ENCODE measurements at regions of chr1 and their contacts with region 1.

Region 1: DNA sequence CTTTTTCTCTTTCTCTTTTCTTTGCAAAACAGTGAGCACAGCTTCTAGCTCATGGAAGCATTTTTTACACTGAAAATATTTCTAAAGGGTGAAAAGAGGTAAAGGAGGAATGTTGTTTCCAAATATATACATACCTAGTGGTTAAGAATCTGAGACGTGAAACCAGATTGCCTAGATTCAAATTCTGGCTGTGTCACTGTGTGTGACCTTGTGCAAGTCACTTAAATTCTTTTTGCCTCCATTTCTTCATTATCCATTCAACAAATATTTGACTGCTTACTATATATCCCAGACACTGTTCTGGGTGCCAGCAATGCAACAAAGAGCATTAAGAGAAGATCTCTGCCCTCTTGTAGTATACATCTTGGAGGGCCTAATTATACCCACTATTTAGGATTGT is 53.3 kb downstream of the ZFYVE9 start:
- DNase-seq: no peak
- ATAC-seq: no peak
- H3K4me3 ChIP-seq: no peak overlapping the region
- H3K4me3 Mint-ChIP-seq: no peak overlapping the region
- H3K27ac ChIP-seq: no peak overlapping the region
- H3K27ac Mint-ChIP-seq: no peak overlapping the region
- H3K4me1 ChIP-seq: no peaks in the 10 kb centered on the region
- H3K4me1 Mint-ChIP-seq: no peaks in the 10 kb centered on the region
- H3K27me3 ChIP-seq: no peaks in the 10 kb centered on the region
- H3K27me3 Mint-ChIP-seq: no peaks in the 10 kb centered on the region
- CTCF ChIP-seq: no peak

Region 2: DNA sequence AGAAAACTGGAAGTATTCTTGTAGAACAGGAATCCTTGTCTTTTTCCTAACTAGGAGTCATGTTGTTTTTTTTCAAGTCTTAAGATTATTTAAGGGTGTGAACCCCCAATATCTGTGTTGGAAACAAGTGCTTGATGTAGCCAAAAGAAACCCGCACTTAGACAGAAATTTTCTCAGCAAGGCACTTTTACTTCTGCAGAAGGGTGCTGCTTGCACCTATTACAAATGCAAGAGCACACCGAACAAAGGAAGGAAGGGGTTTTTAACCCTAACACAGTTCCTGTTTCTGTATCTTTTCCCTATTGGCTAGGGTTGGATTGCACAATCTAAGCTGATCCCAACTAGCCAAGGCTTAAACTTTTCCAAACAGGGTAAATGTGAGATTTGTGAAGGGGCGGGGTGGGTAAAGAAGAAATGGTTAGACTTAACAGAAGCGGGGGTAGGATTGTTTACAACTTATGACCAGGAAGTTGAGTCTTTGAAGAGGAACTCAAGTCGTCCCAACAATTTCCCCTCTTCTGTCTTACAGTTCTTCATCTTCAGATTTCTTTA is 21.8 kb after region 1 on chr1:
- CTCF ChIA-PET with region 1: no interaction called
- POLR2A ChIA-PET with region 1: no interaction called
- intact Hi-C with region 1: loop called in 1 of 2 experiments (anchors 1 kb)
- DNase-seq: no peak
- ATAC-seq: no peak
- H3K4me3 ChIP-seq: no peak overlapping the region
- H3K4me3 Mint-ChIP-seq: no peak overlapping the region
- H3K27ac ChIP-seq: no peak overlapping the region
- H3K27ac Mint-ChIP-seq: no peak overlapping the region
- H3K4me1 ChIP-seq: no peaks in the 10 kb centered on the region
- H3K4me1 Mint-ChIP-seq: no peaks in the 10 kb centered on the region
- H3K27me3 ChIP-seq: no peaks in the 10 kb centered on the region
- H3K27me3 Mint-ChIP-seq: no peaks in the 10 kb centered on the region
- CTCF ChIP-seq: no peak